ENCODE measurements at regions of chr20 and their contacts with region 1.

Region 1: GRCh38 chr20:62875419-62876361 is 14.1 kb upstream of the TCFL5 start:
- DNase-seq: peak; percentile 75 to 91 (median 83)
- ATAC-seq: peak; percentile 97
- H3K4me3 ChIP-seq: peak overlapping the region; percentile 21; the same call in 1 of the 2 replicates
- H3K27ac ChIP-seq: peak overlapping the region; percentile 84
- H3K4me1 ChIP-seq: peaks cover 24 to 59% of the 10 kb centered on the region in 2 experiments
- H3K27me3 ChIP-seq: no peaks in the 10 kb centered on the region
- CTCF ChIP-seq: peak; percentile 84 to 95 (median 94)
- EP300 ChIP-seq: peak; percentile 10; the same call in 1 of the 2 replicates
- POLR2A ChIP-seq: no peak
- RAD21 ChIP-seq: peak; percentile 12 to 57; a peak in 3 of 4 replicates

Region 2: DNA sequence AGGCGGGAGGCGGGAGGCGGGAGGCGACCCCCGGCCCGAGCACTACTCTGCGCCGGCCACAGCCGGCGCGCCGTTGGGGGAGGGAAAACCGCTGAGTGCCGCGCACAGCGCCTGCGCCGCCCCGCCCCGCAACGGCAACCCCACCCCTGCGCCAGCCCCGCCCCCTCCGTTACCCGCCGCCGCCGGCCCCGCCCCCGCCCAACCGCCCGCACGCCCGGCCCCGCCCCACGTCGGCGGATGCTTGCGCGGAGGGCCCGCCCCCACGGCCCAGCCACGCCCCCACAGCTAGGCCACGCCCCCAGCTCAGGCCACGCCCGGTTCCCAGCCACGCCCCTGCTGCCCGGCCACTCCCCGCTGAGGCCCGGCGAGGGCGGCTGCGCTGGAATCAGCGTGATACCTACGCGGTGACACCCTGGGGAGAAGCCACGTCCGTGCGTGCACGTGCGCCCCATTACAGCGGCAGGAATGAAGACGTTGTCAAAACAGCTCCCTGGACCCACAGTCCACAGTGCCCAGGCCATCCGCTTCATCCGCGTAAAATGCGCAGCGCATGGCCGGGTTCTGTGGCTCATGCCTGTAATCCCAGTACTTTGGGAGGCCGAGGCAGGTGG is 13.9 kb before region 1 on chr20 and contains the start of gene TCFL5:
- CTCF ChIA-PET with region 1: no interaction called
- POLR2A ChIA-PET with region 1: interaction called, 13 read pairs
- in situ Hi-C with region 1: no loop called
- intact Hi-C with region 1: loop called (anchors 1 kb)
- DNase-seq: peak; percentile 92 to 94 (median 93)
- ATAC-seq: peak; percentile 96
- H3K4me3 ChIP-seq: peak within 1 kb of the TSS; percentile 49
- H3K27ac ChIP-seq: peak within 1 kb of the TSS; percentile 89
- H3K4me1 ChIP-seq: peaks cover 13 to 32% of the 10 kb centered on the region in 2 experiments; a peak in 4 of 5 replicates
- H3K27me3 ChIP-seq: no peaks in the 10 kb centered on the region
- CTCF ChIP-seq: 0 out of 6 replicates have a peak, but pooled peaks of 1 of the 3 experiments have one; percentile 0
- EP300 ChIP-seq: no peak
- POLR2A ChIP-seq: peak; percentile 75
- RAD21 ChIP-seq: no peak
- polyA plus RNA-seq, gene TCFL5: 1.00 to 1.1 TPM

Region 3: DNA sequence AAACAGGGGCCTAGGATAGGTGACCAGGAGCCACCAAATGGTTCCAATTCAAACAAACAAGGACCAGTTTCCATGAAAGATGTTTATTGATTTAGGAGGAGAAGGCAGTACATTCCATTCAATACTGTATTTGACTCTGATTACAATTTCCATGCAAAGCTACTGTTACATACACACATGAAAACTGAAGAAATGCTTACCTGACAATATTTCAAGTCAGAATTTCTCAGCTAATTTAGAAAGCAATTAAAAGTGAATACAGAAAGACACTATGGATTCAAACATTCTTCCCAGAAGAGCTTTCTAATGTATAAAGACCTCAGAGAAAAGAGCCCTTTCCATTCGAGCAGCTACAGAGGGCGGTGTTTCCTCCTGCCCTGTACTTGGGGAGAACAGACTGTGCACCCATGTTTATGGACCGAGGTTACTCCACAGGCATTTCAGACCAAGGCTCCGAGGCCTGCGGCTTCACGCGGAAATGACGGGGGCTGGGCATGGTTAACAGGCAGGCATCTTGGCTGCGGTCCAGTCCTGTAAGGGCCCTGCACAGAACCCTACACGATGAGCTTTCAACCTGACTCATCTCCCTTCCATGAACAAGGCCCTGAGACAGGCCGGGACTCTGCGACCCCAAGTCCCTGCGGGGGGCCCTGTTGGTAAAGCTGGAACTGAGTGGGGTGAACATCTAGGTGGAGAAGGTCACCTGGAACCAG is 11.6 kb after region 1 on chr20:
- CTCF ChIA-PET with region 1: no interaction called
- POLR2A ChIA-PET with region 1: interaction called, 16 read pairs
- in situ Hi-C with region 1: no loop called
- intact Hi-C with region 1: no loop called
- DNase-seq: peak in 1 of 4 experiments; percentile 47
- ATAC-seq: peak; percentile 75
- H3K4me3 ChIP-seq: no peak overlapping the region
- H3K27ac ChIP-seq: no peak overlapping the region
- H3K4me1 ChIP-seq: peaks cover 0 to 14% of the 10 kb centered on the region in 2 experiments; a peak in 2 of 5 replicates
- H3K27me3 ChIP-seq: no peaks in the 10 kb centered on the region
- CTCF ChIP-seq: peak in 1 of 3 experiments; percentile 19; a peak in 1 of 6 replicates
- EP300 ChIP-seq: no peak
- POLR2A ChIP-seq: no peak
- RAD21 ChIP-seq: no peak

Region 4: DNA sequence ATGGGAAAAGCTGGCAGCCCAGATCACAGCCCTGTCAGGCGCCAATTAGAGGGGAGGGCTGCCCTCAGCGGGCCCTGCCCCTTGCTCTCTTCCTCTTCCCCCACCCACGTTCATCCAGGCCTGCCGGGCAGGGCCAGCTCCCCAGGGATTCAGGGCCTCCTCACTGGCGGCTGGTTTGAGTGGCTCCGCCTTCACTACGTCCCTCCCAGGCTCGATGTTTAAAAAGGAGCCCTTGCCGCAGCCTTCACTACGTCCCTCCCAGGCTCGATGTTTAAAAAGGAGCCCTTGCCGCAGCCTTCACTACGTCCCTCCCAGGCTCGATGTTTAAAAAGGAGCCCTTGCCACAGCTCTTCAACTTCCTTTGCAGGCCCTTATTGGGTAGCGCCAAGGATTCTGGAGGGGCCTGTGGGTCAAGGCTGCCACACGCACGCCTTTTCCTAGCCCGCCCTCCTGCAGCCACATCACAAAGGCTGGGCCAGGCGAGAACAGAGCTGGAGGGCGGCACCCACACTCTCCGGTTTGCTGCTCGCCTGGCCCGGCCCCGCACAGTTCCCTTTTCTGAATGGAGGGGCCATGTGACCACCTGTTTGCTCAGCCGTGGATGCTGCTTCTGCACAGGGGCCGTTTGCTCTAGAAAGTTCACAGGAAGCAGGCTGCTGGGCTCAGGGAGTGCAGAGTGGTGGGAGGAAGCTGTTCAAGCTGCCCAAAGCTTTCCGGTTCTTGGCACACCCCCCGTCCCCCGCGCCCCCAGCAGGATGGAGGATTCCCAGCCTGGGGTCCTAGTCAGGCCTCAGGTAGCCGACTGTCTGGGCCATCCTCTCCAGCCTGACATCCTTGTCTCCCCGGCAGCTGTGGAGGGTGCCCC is 78.4 kb after region 1 on chr20:
- CTCF ChIA-PET with region 1: no interaction called
- POLR2A ChIA-PET with region 1: no interaction called
- in situ Hi-C with region 1: no loop called
- intact Hi-C with region 1: no loop called
- DNase-seq: peak in 2 of 4 experiments; percentile 48 to 50
- ATAC-seq: peak; percentile 73
- H3K4me3 ChIP-seq: no peak overlapping the region
- H3K27ac ChIP-seq: no peak overlapping the region
- H3K4me1 ChIP-seq: peaks cover 3 to 40% of the 10 kb centered on the region in 2 experiments; a peak in 3 of 5 replicates
- H3K27me3 ChIP-seq: peaks cover 13 to 37% of the 10 kb centered on the region in 2 experiments; a peak in 4 of 5 replicates
- CTCF ChIP-seq: no peak
- EP300 ChIP-seq: no peak
- POLR2A ChIP-seq: no peak
- RAD21 ChIP-seq: no peak